Dendritic cell treated with granulocyte-macrophage colony-stimulating factor and Interleukin-4, amounts not matched to agents 40 ng/mL and 50 ng/mL, for 4 days (primary cell): ENCODE measurements at regions of chr17 and their contacts with region 1.

Region 1: DNA sequence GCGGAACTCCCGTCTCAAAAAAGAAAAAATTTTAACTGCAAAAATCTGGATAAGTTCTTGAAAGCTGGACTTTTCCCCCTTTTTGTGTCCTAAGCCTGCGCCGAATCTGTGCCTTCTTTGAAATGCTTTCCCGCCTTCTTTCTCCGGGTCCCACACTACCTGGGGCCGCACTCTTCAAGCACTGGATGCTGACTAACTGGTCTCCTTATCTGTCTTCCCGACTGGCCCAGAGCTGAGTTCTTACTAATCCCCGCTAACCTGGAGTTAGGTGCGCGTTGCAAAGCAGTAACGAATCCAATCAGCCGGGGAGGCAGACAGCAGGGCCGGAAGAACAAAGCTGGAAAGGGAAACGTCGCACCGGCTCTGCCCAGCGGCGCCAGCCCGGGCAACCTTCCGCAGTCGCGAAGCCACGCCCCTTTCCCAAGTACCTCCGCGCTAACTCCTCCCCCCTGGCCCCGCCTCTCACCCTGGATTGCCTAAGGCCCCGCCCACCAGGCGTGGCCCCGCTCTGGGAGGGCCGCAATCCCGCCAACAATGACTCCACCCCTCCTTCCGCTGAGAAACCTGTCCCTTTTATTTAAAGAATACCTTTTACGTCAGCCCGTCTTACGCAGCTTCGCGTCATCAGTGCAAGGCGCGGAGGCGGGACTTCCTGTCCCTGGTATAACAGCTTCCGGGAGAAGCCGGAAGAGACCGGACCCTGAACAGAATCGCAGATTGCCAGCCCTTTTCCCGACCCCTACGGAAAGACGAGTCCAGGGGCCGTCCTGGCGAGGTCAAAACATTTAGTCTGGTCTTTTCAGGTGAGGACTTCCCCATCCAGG is at the start of gene TMUB2:
- H3K4me3 Mint-ChIP-seq: peak within 1 kb of the TSS; percentile 99
- H3K27ac Mint-ChIP-seq: peak within 1 kb of the TSS; percentile 99
- H3K4me1 Mint-ChIP-seq: peaks cover 52% of the 10 kb centered on the region
- H3K27me3 Mint-ChIP-seq: no peaks in the 10 kb centered on the region

Region 2: DNA sequence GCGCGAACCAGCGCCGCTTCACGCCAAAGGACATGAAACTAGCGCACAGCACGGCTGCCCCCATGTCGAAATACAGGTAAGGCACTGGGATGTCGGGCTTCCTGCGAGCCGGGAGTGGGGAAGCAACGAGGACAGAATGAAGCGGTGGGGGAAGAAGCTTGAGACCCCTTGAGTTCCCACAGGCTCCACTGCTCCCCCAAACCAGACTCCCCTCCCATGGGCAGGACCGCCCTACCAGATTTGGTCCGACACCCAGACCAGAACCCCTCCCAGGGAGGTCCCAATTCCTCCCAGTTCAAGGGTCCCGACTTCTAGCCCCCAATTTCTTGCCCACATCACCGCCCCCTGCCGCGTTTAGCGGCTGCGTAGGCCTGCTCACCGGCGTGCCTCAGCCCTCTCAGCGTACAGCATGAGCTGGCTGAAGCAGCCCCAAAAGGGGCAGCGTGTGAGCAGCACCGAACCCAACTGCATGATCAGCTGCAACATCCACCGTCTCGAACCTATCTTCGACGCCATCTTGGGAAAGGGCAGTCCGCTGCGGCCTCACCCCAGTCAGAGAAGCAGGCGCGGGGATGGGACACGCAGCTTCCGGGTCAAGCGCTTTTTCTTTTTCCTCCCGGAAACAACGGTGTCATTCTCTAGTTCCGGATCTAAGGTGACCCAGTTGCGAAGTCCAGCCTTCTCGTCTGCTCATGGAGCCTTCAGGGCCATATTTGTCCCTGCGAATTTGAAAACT is 171.9 kb before region 1 on chr17 and contains the start of gene TMEM101:
- intact Hi-C with region 1: no loop called
- H3K4me3 Mint-ChIP-seq: peak within 1 kb of the TSS; percentile 100
- H3K27ac Mint-ChIP-seq: peak within 1 kb of the TSS; percentile 99
- H3K4me1 Mint-ChIP-seq: peaks cover 35% of the 10 kb centered on the region
- H3K27me3 Mint-ChIP-seq: peaks cover 2% of the 10 kb centered on the region

Region 3: DNA sequence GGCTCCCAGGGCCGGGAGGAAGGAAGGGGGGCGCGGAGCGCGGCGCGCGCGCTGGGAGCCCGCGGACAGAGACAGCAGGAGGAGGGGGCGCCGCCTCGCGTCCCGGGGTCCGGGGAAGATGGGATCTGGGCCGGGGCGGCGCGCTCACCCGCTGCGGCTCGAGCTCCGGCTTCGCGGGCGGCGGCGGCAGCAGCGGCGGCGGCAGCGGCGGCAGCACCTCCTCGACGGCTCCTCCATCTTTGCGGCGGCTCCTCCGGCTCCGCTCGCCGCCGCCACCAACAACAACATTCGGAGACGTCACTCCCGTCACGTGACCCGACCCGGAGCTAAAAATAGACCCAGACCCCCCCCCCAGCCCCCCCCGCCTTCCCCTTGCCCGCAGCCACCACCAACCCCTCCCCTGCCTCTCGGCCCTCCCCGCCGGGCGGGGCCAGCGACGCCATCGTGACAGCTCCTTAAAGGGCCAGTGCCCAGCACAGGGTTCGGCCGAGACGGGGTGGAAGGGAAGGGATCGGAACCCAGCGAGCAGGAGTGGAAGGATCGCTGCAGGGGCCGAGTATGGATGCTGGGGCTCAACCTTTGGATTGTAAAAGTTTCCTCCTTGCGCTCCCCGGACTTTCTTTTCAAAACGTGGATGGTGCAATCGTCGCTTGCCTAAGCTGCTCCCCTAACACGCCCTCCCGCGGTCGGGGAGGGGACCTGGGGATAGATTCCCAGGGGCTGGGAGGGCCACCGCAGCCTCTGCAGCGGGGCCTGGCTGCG is 63.0 kb before region 1 on chr17 and contains the start of gene HDAC5:
- intact Hi-C with region 1: loop called (anchors 1 kb)
- H3K4me3 Mint-ChIP-seq: peak within 1 kb of the TSS; percentile 90
- H3K27ac Mint-ChIP-seq: peak within 1 kb of the TSS; percentile 96
- H3K4me1 Mint-ChIP-seq: peaks cover 41% of the 10 kb centered on the region
- H3K27me3 Mint-ChIP-seq: no peaks in the 10 kb centered on the region

Region 4: GRCh38 chr17:44141717-44142285 is 44.7 kb before region 1 on chr17 and contains the start of gene HROB:
- intact Hi-C with region 1: loop called (anchors 5 kb)
- H3K4me3 Mint-ChIP-seq: peak within 1 kb of the TSS; percentile 79
- H3K27ac Mint-ChIP-seq: peak within 1 kb of the TSS; percentile 76
- H3K4me1 Mint-ChIP-seq: peaks cover 31% of the 10 kb centered on the region
- H3K27me3 Mint-ChIP-seq: peaks cover 3% of the 10 kb centered on the region

Region 5: GRCh38 chr17:44199553-44200477 is 13.3 kb after region 1 on chr17 and contains the start of gene ATXN7L3:
- intact Hi-C with region 1: loop called (anchors 1 kb)
- H3K4me3 Mint-ChIP-seq: peak within 1 kb of the TSS; percentile 92
- H3K27ac Mint-ChIP-seq: peak within 1 kb of the TSS; percentile 97
- H3K4me1 Mint-ChIP-seq: peaks cover 75% of the 10 kb centered on the region
- H3K27me3 Mint-ChIP-seq: no peaks in the 10 kb centered on the region